CD4-positive, alpha-beta T cell (primary cell): ENCODE measurements at regions of chr1 and their contacts with region 1.

Region 1: DNA sequence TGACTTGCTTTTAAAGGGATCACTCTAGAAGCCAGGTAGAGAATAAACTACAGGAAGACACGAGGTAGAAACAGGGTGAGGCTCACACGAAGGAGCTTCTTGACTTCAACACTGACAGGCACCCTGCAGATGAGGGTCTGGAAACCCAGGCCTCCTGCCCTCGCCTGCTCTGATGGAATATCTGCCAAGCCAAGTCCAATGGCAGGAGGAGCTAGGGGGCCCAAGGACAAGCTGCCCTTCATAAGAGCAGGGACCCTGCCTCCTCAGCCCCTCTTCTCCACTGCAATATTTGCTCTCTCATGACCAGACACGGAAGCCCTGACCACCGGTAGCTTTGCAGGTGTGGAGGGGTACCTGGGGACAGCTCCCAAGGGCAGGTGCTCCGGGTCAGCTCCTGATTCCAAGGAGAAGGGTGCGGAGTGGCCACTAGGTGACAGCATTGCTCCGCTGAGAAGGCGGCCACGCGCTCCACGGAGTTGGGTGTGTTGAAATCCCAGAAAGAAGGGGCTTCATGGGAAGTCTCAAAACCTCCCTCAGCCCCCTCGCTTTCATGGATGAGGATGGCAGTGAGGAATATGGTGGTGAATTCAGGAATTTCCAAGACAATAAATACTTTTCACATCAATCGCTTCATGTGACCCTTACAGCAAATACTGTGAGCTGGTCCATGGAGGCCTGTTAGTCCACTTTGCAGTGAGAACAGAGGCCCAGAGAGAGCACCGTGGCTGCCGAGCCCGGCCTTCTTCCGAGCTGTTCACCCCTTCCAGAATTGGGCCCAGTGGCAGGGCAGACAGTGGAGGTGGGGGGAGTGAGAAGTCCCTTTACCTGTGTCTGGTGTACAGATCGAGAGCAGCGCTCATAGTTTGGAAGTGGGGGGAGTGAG is 33.2 kb upstream of the PAX7 start:
- DNase-seq: peak; percentile 31 to 74 (median 53)
- ATAC-seq: no peak
- H3K4me3 ChIP-seq: no peak overlapping the region
- H3K4me3 Mint-ChIP-seq: no peak overlapping the region
- H3K27ac ChIP-seq: no peak overlapping the region
- H3K27ac Mint-ChIP-seq: no peak overlapping the region
- H3K4me1 ChIP-seq: no peaks in the 10 kb centered on the region
- H3K4me1 Mint-ChIP-seq: no peaks in the 10 kb centered on the region
- H3K27me3 ChIP-seq: peaks cover 19 to 26% of the 10 kb centered on the region in 2 experiments
- H3K27me3 Mint-ChIP-seq: peaks cover 49% of the 10 kb centered on the region
- CTCF ChIP-seq: peak; percentile 81

Region 2: DNA sequence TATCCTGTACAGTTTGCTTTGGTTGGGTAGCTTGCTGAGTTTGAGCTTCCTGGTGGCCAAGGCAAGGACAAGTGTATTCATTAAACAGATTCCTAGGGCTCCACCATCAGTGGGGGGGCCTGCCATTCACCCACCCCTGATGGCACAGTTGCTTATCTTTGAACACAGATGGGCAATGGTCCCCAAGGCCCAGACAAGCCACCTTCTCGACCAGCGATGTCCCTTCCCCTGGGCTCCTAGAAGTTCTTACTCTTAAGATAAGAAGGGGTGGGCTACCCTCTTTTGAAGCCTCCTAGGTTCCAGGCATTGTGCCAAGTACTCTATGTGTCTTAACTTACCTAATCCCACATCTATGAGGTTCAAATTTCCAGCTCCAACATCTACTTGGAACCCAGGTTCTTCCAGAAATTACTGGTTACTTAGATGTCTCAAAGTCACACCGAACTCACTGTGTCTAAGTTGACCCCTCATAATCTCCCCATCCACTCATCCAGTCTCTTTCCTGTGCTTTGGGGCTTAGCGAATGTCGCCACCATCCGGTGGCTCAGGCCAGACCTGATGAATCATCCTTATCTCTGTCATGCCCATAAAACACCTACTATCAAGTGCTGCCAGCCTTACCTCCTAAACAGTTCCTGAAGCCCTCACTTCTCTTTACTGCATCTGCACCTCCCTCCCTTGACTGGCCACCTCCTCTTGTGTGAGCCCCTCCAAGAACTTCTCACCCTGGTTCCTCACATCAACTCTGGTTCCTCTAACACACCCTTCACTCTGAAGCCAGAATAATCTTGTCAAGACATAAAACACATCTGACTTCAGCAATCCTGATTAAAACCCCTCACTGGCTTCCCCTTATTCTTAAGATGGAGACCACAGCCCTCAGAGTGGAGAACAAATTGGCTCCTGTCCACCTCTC is 66.6 kb before region 1 on chr1:
- CTCF ChIA-PET with region 1: no interaction called
- POLR2A ChIA-PET with region 1: no interaction called
- intact Hi-C with region 1: no loop called
- DNase-seq: no peak
- ATAC-seq: no peak
- H3K4me3 ChIP-seq: no peak overlapping the region
- H3K4me3 Mint-ChIP-seq: no peak overlapping the region
- H3K27ac ChIP-seq: no peak overlapping the region
- H3K27ac Mint-ChIP-seq: no peak overlapping the region
- H3K4me1 ChIP-seq: no peaks in the 10 kb centered on the region
- H3K4me1 Mint-ChIP-seq: no peaks in the 10 kb centered on the region
- H3K27me3 ChIP-seq: peaks cover 3 to 6% of the 10 kb centered on the region in 2 experiments
- H3K27me3 Mint-ChIP-seq: peaks cover 52% of the 10 kb centered on the region
- CTCF ChIP-seq: no peak

Region 3: GRCh38 chr1:18668796-18669404 is 71.5 kb after region 1 on chr1:
- CTCF ChIA-PET with region 1: no interaction called
- POLR2A ChIA-PET with region 1: no interaction called
- intact Hi-C with region 1: no loop called
- DNase-seq: no peak
- ATAC-seq: no peak
- H3K4me3 ChIP-seq: no peak overlapping the region
- H3K4me3 Mint-ChIP-seq: no peak overlapping the region
- H3K27ac ChIP-seq: no peak overlapping the region
- H3K27ac Mint-ChIP-seq: no peak overlapping the region
- H3K4me1 ChIP-seq: peaks cover 11% of the 10 kb centered on the region
- H3K4me1 Mint-ChIP-seq: peaks cover 18% of the 10 kb centered on the region
- H3K27me3 ChIP-seq: peaks cover 2 to 4% of the 10 kb centered on the region in 2 experiments
- H3K27me3 Mint-ChIP-seq: no peaks in the 10 kb centered on the region
- CTCF ChIP-seq: no peak

Region 4: DNA sequence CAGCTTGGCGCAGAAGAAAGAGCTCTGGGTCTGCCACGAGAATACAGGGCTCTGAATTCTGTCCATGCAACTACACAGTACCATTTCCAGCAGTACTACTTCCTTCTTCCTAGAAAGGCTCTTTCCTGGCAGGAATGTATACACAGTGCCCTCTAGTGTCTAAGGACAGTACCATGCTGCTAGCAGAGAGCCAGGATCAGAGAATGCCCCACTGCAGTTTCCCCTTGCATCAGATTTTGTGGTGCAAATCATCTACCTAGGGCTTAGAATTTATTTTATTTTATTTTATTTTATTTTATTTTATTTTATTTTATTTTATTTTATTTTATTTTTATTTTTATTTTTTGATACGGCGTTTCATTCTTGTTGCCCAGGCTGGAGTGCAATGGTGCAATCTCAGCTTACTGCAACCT is 84.0 kb after region 1 on chr1:
- CTCF ChIA-PET with region 1: interaction called, 6 read pairs
- POLR2A ChIA-PET with region 1: interaction called, 3 read pairs
- intact Hi-C with region 1: loop called (anchors 1 kb)
- DNase-seq: peak in 4 of 14 experiments; percentile 23 to 53 (median 39)
- ATAC-seq: no peak
- H3K4me3 ChIP-seq: no peak overlapping the region
- H3K4me3 Mint-ChIP-seq: no peak overlapping the region
- H3K27ac ChIP-seq: no peak overlapping the region
- H3K27ac Mint-ChIP-seq: no peak overlapping the region
- H3K4me1 ChIP-seq: no peaks in the 10 kb centered on the region
- H3K4me1 Mint-ChIP-seq: no peaks in the 10 kb centered on the region
- H3K27me3 ChIP-seq: peaks cover 4 to 7% of the 10 kb centered on the region in 2 experiments
- H3K27me3 Mint-ChIP-seq: peaks cover 38% of the 10 kb centered on the region
- CTCF ChIP-seq: peak; percentile 67

Region 5: GRCh38 chr1:18820791-18821641 is 223.6 kb after region 1 on chr1:
- CTCF ChIA-PET with region 1: interaction called, 5 read pairs
- POLR2A ChIA-PET with region 1: interaction called, 4 read pairs
- intact Hi-C with region 1: loop called (anchors 1 kb)
- DNase-seq: peak; percentile 23 to 69 (median 50)
- ATAC-seq: peak; percentile 43
- H3K4me3 ChIP-seq: no peak overlapping the region
- H3K4me3 Mint-ChIP-seq: no peak overlapping the region
- H3K27ac ChIP-seq: no peak overlapping the region
- H3K27ac Mint-ChIP-seq: no peak overlapping the region
- H3K4me1 ChIP-seq: no peaks in the 10 kb centered on the region
- H3K4me1 Mint-ChIP-seq: no peaks in the 10 kb centered on the region
- H3K27me3 ChIP-seq: peaks cover 12 to 37% of the 10 kb centered on the region in 2 experiments
- H3K27me3 Mint-ChIP-seq: peaks cover 65% of the 10 kb centered on the region
- CTCF ChIP-seq: peak; percentile 66

Region 6: GRCh38 chr1:18875107-18875795 is 277.9 kb after region 1 on chr1:
- CTCF ChIA-PET with region 1: interaction called, 3 read pairs
- POLR2A ChIA-PET with region 1: interaction called, 3 read pairs
- intact Hi-C with region 1: loop called in 1 of 2 experiments (anchors 1 kb)
- DNase-seq: peak; percentile 30 to 78 (median 60)
- ATAC-seq: peak; percentile 78
- H3K4me3 ChIP-seq: no peak overlapping the region
- H3K4me3 Mint-ChIP-seq: no peak overlapping the region
- H3K27ac ChIP-seq: no peak overlapping the region
- H3K27ac Mint-ChIP-seq: no peak overlapping the region
- H3K4me1 ChIP-seq: no peaks in the 10 kb centered on the region
- H3K4me1 Mint-ChIP-seq: no peaks in the 10 kb centered on the region
- H3K27me3 ChIP-seq: no peaks in the 10 kb centered on the region
- H3K27me3 Mint-ChIP-seq: no peaks in the 10 kb centered on the region
- CTCF ChIP-seq: peak; percentile 71

Region 7: DNA sequence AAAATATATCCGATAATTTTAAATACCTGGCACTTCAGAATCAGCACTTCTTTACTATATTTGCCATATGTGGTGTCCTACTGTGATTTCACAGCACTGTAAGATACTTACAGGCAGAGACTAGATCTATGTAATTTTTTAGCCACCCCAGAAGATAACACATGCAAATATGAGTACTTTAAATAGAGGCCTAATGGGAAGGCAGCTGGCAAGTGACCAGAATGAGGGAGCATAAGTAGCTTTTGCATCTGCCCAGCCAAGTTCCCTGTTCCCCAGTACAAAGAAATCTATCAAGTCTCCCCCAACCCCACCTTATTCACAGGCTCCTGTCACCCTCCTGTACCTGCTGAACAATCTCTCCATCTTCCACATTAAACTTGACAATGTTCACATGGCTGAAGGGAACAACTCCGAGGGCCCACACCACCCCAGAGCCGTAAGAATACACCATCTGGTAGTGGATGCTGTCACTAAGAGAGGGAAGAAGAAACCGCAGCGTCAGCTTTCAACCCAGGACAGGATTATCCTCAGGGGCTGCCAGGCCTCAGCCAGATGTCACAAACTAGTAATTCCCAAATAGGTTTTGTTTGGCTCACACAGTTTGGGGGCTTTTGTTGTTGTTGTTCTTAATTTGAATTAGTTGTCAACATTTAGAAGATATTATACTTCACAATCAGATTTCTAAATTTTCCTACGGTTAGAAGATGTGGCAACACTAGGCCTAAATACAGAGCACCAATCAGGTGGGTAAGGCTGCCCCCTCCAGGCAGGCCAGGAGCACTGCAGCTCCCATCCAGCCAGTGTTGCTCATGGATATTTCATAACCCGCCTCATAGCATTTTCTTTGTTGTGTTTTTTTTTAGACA is 643.5 kb after region 1 on chr1:
- CTCF ChIA-PET with region 1: no interaction called
- POLR2A ChIA-PET with region 1: no interaction called
- intact Hi-C with region 1: loop called in 1 of 2 experiments (anchors 5 kb)
- DNase-seq: peak; percentile 48 to 81 (median 64)
- ATAC-seq: peak; percentile 100
- H3K4me3 ChIP-seq: no peak overlapping the region
- H3K4me3 Mint-ChIP-seq: no peak overlapping the region
- H3K27ac ChIP-seq: no peak overlapping the region
- H3K27ac Mint-ChIP-seq: no peak overlapping the region
- H3K4me1 ChIP-seq: no peaks in the 10 kb centered on the region
- H3K4me1 Mint-ChIP-seq: no peaks in the 10 kb centered on the region
- H3K27me3 ChIP-seq: no peaks in the 10 kb centered on the region
- H3K27me3 Mint-ChIP-seq: no peaks in the 10 kb centered on the region
- CTCF ChIP-seq: peak; percentile 97